ENCODE measurements at regions of chr14 and their contacts with region 1.

Region 1: DNA sequence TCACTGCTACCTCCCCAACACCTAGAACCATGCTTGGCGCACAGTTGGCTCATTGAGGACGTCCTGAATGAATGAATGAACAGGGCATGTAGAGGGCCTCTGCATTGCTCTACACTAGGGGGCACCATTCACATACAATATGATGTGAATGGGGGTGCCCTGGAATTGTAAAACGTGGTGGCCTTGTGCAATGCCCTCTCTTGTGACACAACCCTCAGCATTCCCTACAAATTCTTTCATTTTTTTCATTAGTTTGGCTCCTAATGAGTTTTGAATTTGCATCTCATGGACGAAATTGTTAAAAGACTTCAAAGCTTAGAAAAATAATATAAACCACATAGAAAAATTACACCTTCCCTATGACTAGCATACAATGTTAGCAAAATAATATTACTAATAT is 2.3 kb upstream of the DIO2 start:
- DNase-seq: peak; percentile 68 to 72
- H3K4me3 ChIP-seq: no peak overlapping the region
- H3K4me3 Mint-ChIP-seq: no peak overlapping the region
- H3K27ac Mint-ChIP-seq: no peak overlapping the region
- H3K4me1 ChIP-seq: peaks cover 21% of the 10 kb centered on the region
- H3K4me1 Mint-ChIP-seq: peaks cover 7% of the 10 kb centered on the region
- H3K27me3 ChIP-seq: no peaks in the 10 kb centered on the region
- H3K27me3 Mint-ChIP-seq: peaks cover 3% of the 10 kb centered on the region
- CTCF ChIP-seq: peak; percentile 45 to 52

Region 2: DNA sequence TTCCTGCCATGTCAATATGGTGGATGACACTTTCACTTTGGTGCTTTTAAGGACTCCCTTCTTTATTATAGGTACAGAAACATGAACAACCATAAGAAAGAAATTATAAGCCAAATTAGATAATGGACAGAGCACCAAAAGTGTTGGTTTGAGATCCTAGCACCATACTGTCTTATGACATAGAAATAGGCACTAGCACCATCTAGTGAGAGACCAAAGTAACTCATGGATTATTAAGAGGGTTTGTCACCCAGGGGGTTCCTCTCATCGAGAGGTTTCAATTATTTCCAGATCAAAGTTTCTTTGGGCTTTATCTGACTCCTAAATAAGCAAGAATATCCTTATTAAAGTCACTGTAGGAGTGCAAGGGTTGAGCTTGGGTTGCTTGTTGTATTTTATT is 150.7 kb after region 1 on chr14:
- CTCF ChIA-PET with region 1: no interaction called
- POLR2A ChIA-PET with region 1: no interaction called
- intact Hi-C with region 1: loop called (anchors 1 kb)
- DNase-seq: peak in 1 of 2 experiments; percentile 4
- H3K4me3 ChIP-seq: no peak overlapping the region
- H3K4me3 Mint-ChIP-seq: no peak overlapping the region
- H3K27ac Mint-ChIP-seq: no peak overlapping the region
- H3K4me1 ChIP-seq: peaks cover 12% of the 10 kb centered on the region
- H3K4me1 Mint-ChIP-seq: peaks cover 7% of the 10 kb centered on the region
- H3K27me3 ChIP-seq: no peaks in the 10 kb centered on the region
- H3K27me3 Mint-ChIP-seq: no peaks in the 10 kb centered on the region
- CTCF ChIP-seq: peak in 1 of 2 experiments; percentile 11

Region 3: DNA sequence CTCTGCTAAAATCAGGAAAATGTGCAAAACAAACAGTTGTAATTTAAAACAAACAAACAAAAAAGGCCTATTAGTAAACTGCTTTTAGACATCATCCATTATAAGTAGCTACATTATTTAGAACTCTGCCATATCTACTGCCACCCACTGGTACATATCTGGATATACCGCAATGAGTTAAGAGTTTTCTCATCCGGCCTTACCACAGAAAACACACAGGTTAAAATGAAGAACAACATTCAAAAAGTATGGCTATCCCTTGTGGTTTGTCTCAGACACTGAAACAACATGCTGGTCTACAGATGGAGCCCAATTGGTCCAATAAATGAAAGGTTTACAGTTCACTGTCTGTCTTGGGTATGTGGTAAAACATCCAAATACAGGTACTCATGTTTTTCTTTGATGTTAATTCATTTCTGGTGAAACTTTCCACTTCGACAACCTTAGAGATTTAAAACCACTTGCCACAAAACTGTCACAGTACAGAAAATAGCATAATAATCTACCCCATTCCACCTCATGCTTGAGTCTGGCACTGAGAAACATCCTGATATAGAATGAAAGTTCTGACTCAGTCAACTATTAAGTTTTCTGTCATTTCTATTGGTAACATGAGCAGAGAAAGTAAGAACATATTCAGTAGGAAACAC is 373.6 kb after region 1 on chr14:
- CTCF ChIA-PET with region 1: no interaction called
- POLR2A ChIA-PET with region 1: no interaction called
- intact Hi-C with region 1: loop called (anchors 1 kb)
- DNase-seq: no peak
- H3K4me3 ChIP-seq: no peak overlapping the region
- H3K4me3 Mint-ChIP-seq: no peak overlapping the region
- H3K27ac Mint-ChIP-seq: no peak overlapping the region
- H3K4me1 ChIP-seq: peaks cover 15% of the 10 kb centered on the region
- H3K4me1 Mint-ChIP-seq: peaks cover 12% of the 10 kb centered on the region
- H3K27me3 ChIP-seq: no peaks in the 10 kb centered on the region
- H3K27me3 Mint-ChIP-seq: no peaks in the 10 kb centered on the region
- CTCF ChIP-seq: peak; percentile 21 to 46